CD4-positive, alpha-beta T cell (primary cell): ENCODE measurements at regions of chr12 and their contacts with region 1.

Region 1: DNA sequence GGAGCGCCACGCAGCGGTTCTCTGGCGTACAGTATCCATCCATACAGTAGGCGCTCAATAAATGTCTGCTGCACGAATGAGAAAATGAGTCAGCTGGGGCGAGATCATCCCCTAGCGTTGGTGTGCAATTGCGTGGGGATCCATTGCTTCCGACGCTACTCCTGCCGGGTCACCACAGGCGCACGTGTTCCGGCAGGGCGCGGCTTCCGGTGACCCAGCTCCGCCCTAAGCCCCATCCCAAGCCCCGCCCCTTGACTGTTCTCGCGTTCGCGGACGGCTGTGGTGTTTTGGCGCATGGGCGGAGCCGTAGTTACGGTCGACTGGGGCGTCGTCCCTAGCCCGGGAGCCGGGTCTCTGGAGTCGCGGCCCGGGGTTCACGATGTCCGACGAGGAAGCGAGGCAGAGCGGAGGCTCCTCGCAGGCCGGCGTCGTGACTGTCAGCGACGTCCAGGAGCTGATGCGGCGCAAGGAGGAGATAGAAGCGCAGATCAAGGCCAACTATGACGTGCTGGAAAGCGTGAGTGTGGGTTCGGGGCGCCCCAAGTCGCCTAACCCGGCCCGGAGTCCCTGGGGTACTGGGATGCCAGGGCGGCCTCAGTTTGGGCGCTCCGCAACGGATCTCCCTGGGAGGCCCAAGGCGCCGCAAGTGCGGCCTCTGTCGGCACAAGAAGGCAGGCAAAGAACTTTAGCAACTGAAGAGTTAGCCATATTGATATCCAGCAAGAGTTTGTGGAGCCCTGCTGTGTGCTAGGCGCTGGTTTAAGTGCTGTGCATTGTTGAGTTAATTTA is at the start of gene PSMD9:
- DNase-seq: peak; percentile 96 to 99 (median 98)
- ATAC-seq: peak; percentile 90
- H3K4me3 ChIP-seq: peak within 1 kb of the TSS; percentile 96
- H3K4me3 Mint-ChIP-seq: peak within 1 kb of the TSS; percentile 96
- H3K27ac ChIP-seq: peak within 1 kb of the TSS; percentile 86 to 97
- H3K27ac Mint-ChIP-seq: peak within 1 kb of the TSS; percentile 96
- H3K4me1 ChIP-seq: peaks cover 39% of the 10 kb centered on the region
- H3K4me1 Mint-ChIP-seq: peaks cover 32% of the 10 kb centered on the region
- H3K27me3 ChIP-seq: no peaks in the 10 kb centered on the region
- H3K27me3 Mint-ChIP-seq: no peaks in the 10 kb centered on the region
- CTCF ChIP-seq: peak; percentile 21
- total RNA-seq, gene PSMD9: 29.5 to 31.8 TPM

Region 2: DNA sequence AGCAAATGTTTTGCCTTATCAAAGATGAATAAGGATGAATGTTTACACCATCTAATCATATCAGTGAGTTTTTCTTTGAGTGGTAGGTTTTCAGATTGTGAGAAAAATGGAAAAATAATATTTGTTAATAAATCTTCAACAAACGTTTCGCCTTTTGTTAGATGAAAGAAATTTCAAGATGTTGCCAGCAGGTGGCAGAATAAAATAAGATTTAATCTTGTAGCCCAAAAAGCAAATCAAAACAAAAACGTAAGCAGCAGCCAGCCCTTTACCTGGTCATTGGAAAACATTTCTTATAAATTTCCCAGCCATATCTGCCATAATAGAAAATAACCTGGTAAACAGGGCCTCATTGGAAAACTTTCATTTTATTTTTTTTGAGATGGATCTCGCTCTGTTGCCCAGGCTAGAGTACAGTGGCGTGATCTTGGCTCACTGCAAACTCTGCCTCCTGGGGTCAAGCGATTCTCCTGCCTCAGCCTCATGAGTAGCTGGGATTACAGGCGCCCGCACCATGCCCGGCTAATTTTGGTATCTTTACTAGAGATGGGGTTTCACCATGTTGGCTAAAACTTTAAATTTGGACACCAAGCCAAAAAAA is 191.5 kb before region 1 on chr12:
- CTCF ChIA-PET with region 1: no interaction called
- POLR2A ChIA-PET with region 1: no interaction called
- intact Hi-C with region 1: loop called (anchors 2 to 5 kb)
- DNase-seq: peak in 4 of 14 experiments; percentile 55 to 79 (median 78)
- ATAC-seq: peak; percentile 32
- H3K4me3 ChIP-seq: no peak overlapping the region
- H3K4me3 Mint-ChIP-seq: no peak overlapping the region
- H3K27ac ChIP-seq: no peak overlapping the region
- H3K27ac Mint-ChIP-seq: no peak overlapping the region
- H3K4me1 ChIP-seq: peaks cover 2% of the 10 kb centered on the region
- H3K4me1 Mint-ChIP-seq: peaks cover 4% of the 10 kb centered on the region
- H3K27me3 ChIP-seq: no peaks in the 10 kb centered on the region
- H3K27me3 Mint-ChIP-seq: no peaks in the 10 kb centered on the region
- CTCF ChIP-seq: peak; percentile 81

Region 3: GRCh38 chr12:121773011-121773777 is 115.5 kb before region 1 on chr12:
- CTCF ChIA-PET with region 1: no interaction called
- POLR2A ChIA-PET with region 1: no interaction called
- intact Hi-C with region 1: loop called in 1 of 2 experiments (anchors 5 kb)
- DNase-seq: peak; percentile 67 to 89 (median 76)
- ATAC-seq: peak; percentile 84
- H3K4me3 ChIP-seq: no peak overlapping the region
- H3K4me3 Mint-ChIP-seq: no peak overlapping the region
- H3K27ac ChIP-seq: no peak overlapping the region
- H3K27ac Mint-ChIP-seq: no peak overlapping the region
- H3K4me1 ChIP-seq: peaks cover 26% of the 10 kb centered on the region
- H3K4me1 Mint-ChIP-seq: peaks cover 13% of the 10 kb centered on the region
- H3K27me3 ChIP-seq: no peaks in the 10 kb centered on the region
- H3K27me3 Mint-ChIP-seq: no peaks in the 10 kb centered on the region
- CTCF ChIP-seq: peak; percentile 91

Region 4: GRCh38 chr12:121811434-121812319 is 77.0 kb before region 1 on chr12:
- CTCF ChIA-PET with region 1: interaction called, 23 read pairs
- POLR2A ChIA-PET with region 1: interaction called, 15 read pairs
- intact Hi-C with region 1: loop called (anchors 1 to 5 kb)
- DNase-seq: peak in 13 of 14 experiments; percentile 33 to 85 (median 66)
- ATAC-seq: peak; percentile 69
- H3K4me3 ChIP-seq: peak overlapping the region; percentile 64
- H3K4me3 Mint-ChIP-seq: peak overlapping the region; percentile 79
- H3K27ac ChIP-seq: peak overlapping the region; percentile 1 to 44
- H3K27ac Mint-ChIP-seq: peak overlapping the region; percentile 75
- H3K4me1 ChIP-seq: peaks cover 74% of the 10 kb centered on the region
- H3K4me1 Mint-ChIP-seq: peaks cover 58% of the 10 kb centered on the region
- H3K27me3 ChIP-seq: no peaks in the 10 kb centered on the region
- H3K27me3 Mint-ChIP-seq: no peaks in the 10 kb centered on the region
- CTCF ChIP-seq: peak; percentile 97

Region 5: DNA sequence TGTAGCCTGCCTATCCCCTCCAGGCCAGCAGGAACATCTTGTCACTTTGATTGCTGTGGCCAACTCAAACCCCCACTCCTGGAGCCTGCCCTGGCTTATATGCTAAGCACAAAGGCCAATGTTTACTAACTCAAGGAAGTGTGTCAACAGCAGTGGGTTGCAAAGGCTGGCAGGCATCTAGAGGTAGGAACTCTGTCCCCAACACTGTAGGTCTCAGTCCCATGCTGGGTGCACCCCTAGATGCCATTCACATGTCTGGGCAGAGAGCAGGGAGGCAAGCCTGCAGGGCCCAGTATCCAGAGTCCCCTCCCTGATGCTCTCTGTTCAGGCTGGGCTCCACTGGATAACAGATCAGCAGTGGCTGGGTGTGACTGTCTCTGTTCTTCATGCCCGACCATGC is 28.4 kb before region 1 on chr12:
- CTCF ChIA-PET with region 1: no interaction called
- POLR2A ChIA-PET with region 1: no interaction called
- intact Hi-C with region 1: no loop called
- DNase-seq: no peak
- ATAC-seq: no peak
- H3K4me3 ChIP-seq: no peak overlapping the region
- H3K4me3 Mint-ChIP-seq: no peak overlapping the region
- H3K27ac ChIP-seq: no peak overlapping the region
- H3K27ac Mint-ChIP-seq: no peak overlapping the region
- H3K4me1 ChIP-seq: no peaks in the 10 kb centered on the region
- H3K4me1 Mint-ChIP-seq: no peaks in the 10 kb centered on the region
- H3K27me3 ChIP-seq: no peaks in the 10 kb centered on the region
- H3K27me3 Mint-ChIP-seq: no peaks in the 10 kb centered on the region
- CTCF ChIP-seq: no peak

Region 6: GRCh38 chr12:121917979-121918678 is 29.5 kb after region 1 on chr12 and contains the start of gene CFAP251:
- CTCF ChIA-PET with region 1: interaction called, 9 read pairs
- POLR2A ChIA-PET with region 1: interaction called, 9 read pairs
- intact Hi-C with region 1: loop called in 1 of 2 experiments (anchors 2 kb)
- DNase-seq: peak; percentile 87 to 98 (median 95)
- ATAC-seq: peak; percentile 99
- H3K4me3 ChIP-seq: peak within 1 kb of the TSS; percentile 51
- H3K4me3 Mint-ChIP-seq: peak within 1 kb of the TSS; percentile 52
- H3K27ac ChIP-seq: peak within 1 kb of the TSS; percentile 48 to 69
- H3K27ac Mint-ChIP-seq: peak within 1 kb of the TSS; percentile 80
- H3K4me1 ChIP-seq: peaks cover 14% of the 10 kb centered on the region
- H3K4me1 Mint-ChIP-seq: peaks cover 8% of the 10 kb centered on the region
- H3K27me3 ChIP-seq: no peaks in the 10 kb centered on the region
- H3K27me3 Mint-ChIP-seq: no peaks in the 10 kb centered on the region
- CTCF ChIP-seq: peak; percentile 91
- total RNA-seq, gene CFAP251: 0.28 to 0.33 TPM

Region 7: DNA sequence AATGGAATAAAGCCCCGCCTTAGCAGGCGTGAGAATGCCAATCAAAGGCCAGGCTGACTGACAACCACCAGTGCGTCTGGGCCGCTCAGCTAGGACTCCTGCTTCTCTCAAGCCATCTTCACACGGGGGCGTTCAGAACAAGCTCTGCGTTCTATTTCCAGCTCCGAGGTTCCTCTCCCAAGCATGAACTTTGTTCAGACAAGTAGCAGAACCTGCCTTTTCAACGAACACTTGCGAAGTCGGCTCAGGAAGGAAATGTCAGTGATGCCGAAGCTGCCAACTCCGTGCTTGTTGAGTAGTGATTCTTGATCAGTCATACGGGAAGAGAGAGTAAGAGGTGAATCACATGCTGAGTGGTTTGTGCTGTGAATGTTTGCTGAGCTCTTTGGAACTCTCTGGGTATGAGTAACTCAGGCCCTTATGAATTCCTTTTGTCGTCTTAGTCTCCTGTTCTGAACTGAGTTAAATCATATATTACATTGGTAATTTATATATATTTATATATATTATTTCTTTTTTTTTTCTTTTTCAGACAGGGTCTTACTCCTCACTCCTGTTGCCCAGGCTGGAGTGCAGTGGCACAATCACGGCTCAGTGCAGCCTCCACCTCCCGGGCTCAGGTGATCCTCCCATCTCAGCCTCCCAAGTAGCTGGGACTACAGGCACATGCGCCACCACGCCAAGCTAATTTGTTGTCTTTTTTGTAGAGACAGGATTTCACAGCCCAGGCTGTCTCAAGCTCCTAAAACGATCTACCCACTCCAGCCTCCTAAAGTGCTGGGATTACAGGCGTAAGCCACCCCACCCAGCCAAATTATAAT is 103.6 kb after region 1 on chr12:
- CTCF ChIA-PET with region 1: no interaction called
- POLR2A ChIA-PET with region 1: no interaction called
- intact Hi-C with region 1: no loop called
- DNase-seq: peak in 11 of 14 experiments; percentile 14 to 64 (median 39)
- ATAC-seq: peak; percentile 89
- H3K4me3 ChIP-seq: no peak overlapping the region
- H3K4me3 Mint-ChIP-seq: no peak overlapping the region
- H3K27ac ChIP-seq: no peak overlapping the region
- H3K27ac Mint-ChIP-seq: peak overlapping the region; percentile 45
- H3K4me1 ChIP-seq: peaks cover 10% of the 10 kb centered on the region
- H3K4me1 Mint-ChIP-seq: peaks cover 5% of the 10 kb centered on the region
- H3K27me3 ChIP-seq: no peaks in the 10 kb centered on the region
- H3K27me3 Mint-ChIP-seq: no peaks in the 10 kb centered on the region
- CTCF ChIP-seq: no peak